HEK293T (cell line): ENCODE measurements at regions of chr14 and their contacts with region 1.

Region 1: GRCh38 chr14:54366736-54367735 is 29.8 kb upstream of the CDKN3 start:
- DNase-seq: peak; percentile 72

Region 2: DNA sequence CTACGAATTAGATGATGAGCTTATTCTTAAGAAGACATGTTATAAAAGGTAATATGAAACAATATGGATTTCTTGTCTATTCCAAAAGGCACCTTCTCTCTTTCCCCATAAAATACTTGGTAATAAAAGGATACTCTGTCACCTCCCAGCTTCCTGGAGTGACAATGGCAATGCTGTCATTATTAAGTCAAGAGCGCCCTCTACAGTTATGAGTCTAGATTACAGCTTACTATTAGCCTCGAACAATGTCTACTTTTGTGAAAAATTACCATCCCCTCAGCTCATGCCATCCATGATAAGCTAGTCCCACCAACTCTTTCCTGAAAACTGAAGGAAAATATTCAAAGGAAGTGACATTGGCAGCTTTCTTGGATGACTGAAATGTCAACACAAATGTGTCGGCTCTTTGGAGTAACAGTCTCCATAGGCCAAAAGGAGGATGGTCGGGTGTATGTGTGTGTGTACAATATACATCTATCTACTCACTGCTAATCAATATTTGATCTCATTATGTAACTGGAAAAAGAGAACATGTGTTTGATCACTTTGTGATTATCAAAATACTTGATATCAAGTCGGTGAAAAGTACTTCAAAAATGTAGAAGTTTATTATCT is 18.9 kb before region 1 on chr14:
- CTCF ChIA-PET with region 1: interaction called, 10 read pairs
- POLR2A ChIA-PET with region 1: interaction called, 7 read pairs
- DNase-seq: peak; percentile 57

Region 3: DNA sequence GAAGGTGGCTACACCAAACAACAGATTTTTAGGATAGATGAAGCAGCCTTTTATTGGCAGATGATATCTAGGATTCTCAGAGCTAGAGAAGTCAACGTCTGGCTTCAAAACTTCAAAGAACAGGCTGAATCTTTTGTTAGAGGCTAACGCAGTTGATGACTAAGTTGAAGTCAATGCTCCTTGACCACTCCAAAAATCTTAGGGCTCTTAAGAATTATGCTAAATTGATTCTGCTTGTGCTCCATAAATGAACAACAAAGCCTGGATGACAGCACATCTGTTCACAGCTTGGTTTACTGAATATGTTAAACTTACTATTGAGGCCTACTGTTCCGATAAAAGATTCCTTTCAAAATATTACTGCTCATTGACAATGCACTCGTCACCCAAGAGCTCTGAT is 16.8 kb after region 1 on chr14:
- CTCF ChIA-PET with region 1: no interaction called
- POLR2A ChIA-PET with region 1: no interaction called
- DNase-seq: no peak

Region 4: DNA sequence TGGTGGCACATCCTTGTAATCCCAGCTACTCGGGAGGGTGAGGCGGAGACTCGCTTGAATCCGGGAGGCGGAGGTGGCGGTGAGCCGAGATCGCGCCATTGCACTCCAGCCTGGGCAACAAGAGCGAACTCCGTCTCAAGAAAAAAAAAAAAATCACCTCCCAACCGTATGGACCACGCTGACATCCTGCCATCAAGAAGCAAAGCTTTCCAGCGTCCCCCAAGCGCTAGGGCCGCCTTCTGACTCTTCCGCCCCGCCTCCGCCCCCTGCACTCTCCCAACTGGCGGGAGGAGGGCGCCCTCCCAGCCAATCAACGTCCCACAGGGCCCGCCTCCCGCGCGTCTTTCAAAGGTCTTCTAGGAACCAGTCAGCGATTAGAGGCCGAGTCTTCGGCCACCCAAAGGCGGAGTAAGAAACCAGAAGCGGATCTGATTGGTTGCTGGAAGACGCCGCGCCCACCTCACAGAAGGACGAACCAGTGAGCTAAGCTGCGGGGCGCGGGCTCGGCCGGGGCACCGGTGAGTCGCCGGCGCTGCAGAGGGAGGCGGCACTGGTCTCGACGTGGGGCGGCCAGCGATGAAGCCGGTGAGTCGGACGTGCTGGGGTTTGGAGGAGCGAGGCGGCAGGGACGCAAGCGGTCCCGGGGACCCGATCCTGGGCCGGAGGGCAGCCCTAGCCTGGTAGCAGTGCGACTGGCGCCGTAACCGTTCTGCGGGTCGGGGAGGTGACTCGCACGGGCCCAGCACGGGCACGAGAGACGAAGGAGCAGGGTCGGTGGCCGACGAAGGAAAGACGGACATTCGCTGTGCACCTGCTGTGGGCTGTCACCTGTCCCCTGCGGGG is 29.7 kb after region 1 on chr14 and contains the start of gene CDKN3:
- CTCF ChIA-PET with region 1: interaction called, 5 read pairs
- POLR2A ChIA-PET with region 1: interaction called, 13 read pairs
- DNase-seq: peak; percentile 95

Region 5: DNA sequence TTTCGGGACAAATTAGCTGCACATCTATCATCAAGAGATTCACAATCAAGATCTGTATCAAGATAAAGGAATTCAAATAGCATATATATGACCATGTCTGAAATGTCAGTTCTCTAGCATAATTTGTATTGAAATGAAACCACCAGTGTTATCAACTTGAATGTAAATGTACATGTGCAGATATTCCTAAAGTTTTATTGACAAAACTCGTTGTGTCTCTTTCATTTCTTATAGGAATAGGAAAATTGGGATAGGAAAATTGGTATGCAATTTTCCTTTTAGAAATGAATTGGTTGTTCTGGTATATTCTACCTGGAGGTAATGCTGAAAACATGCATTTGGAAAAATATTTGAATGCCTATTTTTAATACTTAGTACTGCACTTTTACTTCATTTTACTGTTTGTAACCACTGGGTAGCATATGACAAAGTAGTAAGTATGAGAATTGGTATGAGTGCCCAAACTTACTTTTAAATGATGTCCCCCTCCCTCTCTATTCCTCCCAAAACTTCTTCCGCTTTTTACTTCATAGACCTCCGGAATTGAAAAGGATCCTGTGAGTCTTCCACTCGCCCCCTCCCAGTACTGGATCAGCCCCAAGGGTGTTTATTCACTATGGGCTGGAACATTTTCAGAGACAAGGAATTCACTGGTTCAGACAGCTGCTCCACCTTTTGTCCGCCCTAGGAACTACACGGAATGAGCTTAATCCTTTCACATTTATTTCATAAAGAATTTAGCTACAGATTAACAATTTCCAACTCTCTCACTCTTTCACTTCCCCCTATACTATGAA is 53.2 kb after region 1 on chr14:
- CTCF ChIA-PET with region 1: interaction called, 11 read pairs
- POLR2A ChIA-PET with region 1: interaction called, 10 read pairs
- DNase-seq: peak; percentile 64

Region 6: DNA sequence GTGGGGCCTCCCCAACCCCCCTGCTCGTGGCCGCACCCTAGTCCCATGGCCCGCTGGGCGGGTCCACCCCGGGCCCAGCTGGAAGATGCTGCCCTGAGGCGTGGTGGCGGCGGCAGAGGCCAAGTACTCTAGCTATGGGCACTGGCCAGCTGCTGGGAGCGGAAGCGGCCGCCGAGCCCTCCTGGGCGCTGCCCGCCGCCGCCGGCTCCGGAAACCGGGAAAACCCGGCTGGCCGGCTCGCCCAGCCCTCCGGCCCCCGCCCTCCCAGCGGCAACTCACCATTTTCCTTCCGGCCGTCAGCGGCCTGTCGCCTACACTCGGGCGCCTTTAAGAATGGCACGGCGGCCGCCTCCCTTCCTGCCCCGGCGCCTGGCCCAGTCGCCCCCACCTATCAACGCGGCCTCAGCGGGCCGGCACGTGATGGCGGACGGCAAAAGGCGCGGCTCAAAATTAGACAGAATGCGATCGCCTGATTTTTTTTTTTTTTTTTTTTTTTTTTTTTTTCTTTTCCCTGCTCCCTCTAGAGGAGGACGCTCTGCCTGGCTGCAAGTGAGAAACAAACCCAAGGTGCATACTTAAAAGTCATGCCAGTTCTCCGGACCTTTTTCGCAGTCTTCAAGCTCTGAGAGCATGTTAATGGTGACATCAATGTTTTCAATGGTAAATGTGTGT is 121.7 kb after region 1 on chr14 and contains the start of gene GMFB:
- CTCF ChIA-PET with region 1: interaction called, 3 read pairs
- POLR2A ChIA-PET with region 1: interaction called, 12 read pairs
- DNase-seq: peak; percentile 84